HEK293 (cell line): ENCODE measurements at regions of chr9 and their contacts with region 1.

Region 1: GRCh38 chr9:95167998-95168397 is 149.5 kb downstream of the FANCC start:
- H3K4me3 ChIP-seq: no peak overlapping the region
- H3K27ac ChIP-seq: no peak overlapping the region
- H3K4me1 ChIP-seq: no peaks in the 10 kb centered on the region
- CTCF ChIP-seq: no peak

Region 2: GRCh38 chr9:95157481-95158151 is 10.4 kb before region 1 on chr9:
- CTCF ChIA-PET with region 1: interaction called, 12 read pairs
- POLR2A ChIA-PET with region 1: interaction called, 3 read pairs
- H3K4me3 ChIP-seq: no peak overlapping the region
- H3K27ac ChIP-seq: no peak overlapping the region
- H3K4me1 ChIP-seq: peaks cover 3% of the 10 kb centered on the region; the same call in 1 of the 2 replicates
- CTCF ChIP-seq: no peak

Region 3: GRCh38 chr9:95181226-95181818 is 13.3 kb after region 1 on chr9:
- CTCF ChIA-PET with region 1: interaction called, 19 read pairs
- POLR2A ChIA-PET with region 1: no interaction called
- H3K4me3 ChIP-seq: no peak overlapping the region
- H3K27ac ChIP-seq: no peak overlapping the region
- H3K4me1 ChIP-seq: no peaks in the 10 kb centered on the region
- CTCF ChIP-seq: no peak